Naive thymus-derived CD8-positive, alpha-beta T cell (primary cell): ENCODE measurements at regions of chr19 and their contacts with region 1.

Region 1: DNA sequence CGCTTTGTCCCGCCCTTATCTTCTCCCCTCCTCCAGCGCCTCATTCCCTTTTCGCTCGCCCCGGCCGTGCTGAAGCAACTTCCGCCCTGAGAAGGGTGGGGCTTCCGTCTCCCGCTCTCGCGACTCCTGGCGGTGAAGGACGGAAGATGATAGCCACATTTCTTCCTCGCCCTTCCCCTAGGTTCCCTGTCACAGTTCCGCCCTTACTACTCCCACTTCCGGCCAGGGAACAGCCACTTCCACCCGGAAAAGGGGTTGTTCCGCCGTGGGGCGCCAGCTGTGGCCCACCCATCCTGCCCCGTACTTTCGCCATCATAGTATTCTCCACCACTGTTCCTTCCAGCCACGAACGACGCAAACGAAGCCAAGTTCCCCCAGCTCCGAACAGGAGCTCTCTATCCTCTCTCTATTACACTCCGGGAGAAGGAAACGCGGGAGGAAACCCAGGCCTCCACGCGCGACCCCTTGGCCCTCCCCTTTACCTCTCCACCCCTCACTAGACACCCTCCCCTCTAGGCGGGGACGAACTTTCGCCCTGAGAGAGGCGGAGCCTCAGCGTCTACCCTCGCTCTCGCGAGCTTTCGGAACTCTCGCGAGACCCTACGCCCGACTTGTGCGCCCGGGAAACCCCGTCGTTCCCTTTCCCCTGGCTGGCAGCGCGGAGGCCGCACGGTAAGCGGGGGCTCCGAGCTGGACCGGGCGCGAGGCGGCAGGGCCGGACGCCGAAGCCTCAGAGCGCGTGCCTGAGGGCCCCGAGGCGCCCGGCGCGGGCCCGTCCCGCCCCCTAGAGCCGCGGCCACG is at the start of gene RPS19:
- DNase-seq: peak; percentile 94 to 99 (median 98)
- ATAC-seq: peak; percentile 82 to 86
- H3K4me3 Mint-ChIP-seq: peak within 1 kb of the TSS; percentile 80 to 100 (median 95)
- H3K27ac Mint-ChIP-seq: peak within 1 kb of the TSS; percentile 84 to 99 (median 97)
- H3K4me1 Mint-ChIP-seq: peaks cover 28 to 52% (median 44%) of the 10 kb centered on the region in 4 donors
- H3K27me3 Mint-ChIP-seq: no peaks in the 10 kb centered on the region
- polyA plus RNA-seq, gene RPS19: 6,905 to 8,825 (median 8,505) TPM

Region 2: DNA sequence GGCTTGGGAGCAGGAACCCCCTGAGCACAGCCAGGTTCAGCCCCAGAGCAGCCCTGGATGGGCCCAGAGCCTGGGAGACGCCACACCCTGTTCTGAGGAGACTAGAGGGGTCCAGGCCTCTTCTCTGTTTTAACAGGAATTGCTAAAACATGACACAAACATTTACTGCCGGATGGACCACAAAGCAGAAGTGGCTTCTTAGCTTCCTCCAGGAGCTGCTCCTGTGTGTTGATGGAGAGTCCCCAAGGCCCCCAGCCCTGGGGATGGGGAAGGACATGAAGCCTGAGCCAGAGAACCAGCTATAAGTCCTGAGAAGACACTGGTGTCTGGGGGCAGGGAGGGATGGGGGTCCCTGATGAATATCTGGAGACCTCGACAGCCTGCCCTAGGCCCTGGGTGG is 48.8 kb before region 1 on chr19:
- POLR2A ChIA-PET with region 1: no interaction called
- DNase-seq: no peak
- ATAC-seq: no peak
- H3K4me3 Mint-ChIP-seq: no peak overlapping the region
- H3K27ac Mint-ChIP-seq: no peak overlapping the region
- H3K4me1 Mint-ChIP-seq: peaks cover 5 to 29% (median 15%) of the 10 kb centered on the region in 4 donors
- H3K27me3 Mint-ChIP-seq: peaks cover 4 to 46% (median 7%) of the 10 kb centered on the region in 5 donors

Region 3: DNA sequence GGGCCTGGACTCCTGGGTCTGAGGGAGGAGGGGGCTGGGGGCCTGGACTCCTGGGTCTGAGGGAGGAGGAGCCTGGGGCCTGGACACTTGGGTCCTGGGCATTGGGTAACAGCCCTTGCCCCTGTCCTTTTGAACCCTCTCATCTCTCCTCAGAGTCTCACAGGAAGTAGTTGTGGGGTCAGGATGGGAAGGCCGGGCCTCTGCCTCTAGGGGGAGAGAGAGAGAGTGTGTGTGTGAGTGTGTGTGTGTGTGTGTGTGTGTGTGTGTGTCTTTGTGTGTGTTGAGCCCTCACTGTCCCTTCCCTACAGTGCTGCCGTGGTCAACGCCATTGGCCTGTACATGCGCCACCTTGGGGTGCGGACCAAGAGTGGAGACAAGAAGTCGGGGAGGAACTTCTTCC is 34.1 kb after region 1 on chr19:
- POLR2A ChIA-PET with region 1: interaction called, 819 read pairs
- DNase-seq: peak in 1 of 10 donors; percentile 42
- ATAC-seq: peak; percentile 19 to 41
- H3K4me3 Mint-ChIP-seq: peak overlapping the region in 9 of 10 donors; percentile 53 to 86 (median 74)
- H3K27ac Mint-ChIP-seq: peak overlapping the region; percentile 78 to 98 (median 90)
- H3K4me1 Mint-ChIP-seq: peaks cover 37 to 81% (median 75%) of the 10 kb centered on the region in 4 donors
- H3K27me3 Mint-ChIP-seq: no peaks in the 10 kb centered on the region

Region 4: GRCh38 chr19:41934849-41935374 is 75.1 kb after region 1 on chr19:
- POLR2A ChIA-PET with region 1: interaction called, 12 read pairs
- DNase-seq: peak; percentile 64 to 90 (median 76)
- ATAC-seq: peak; percentile 72 to 77
- H3K4me3 Mint-ChIP-seq: peak overlapping the region in 9 of 10 donors; percentile 25 to 78 (median 52)
- H3K27ac Mint-ChIP-seq: peak overlapping the region; percentile 81 to 96 (median 88)
- H3K4me1 Mint-ChIP-seq: peaks cover 41 to 70% (median 61%) of the 10 kb centered on the region in 4 donors
- H3K27me3 Mint-ChIP-seq: peaks cover 0 to 7% (median 0%) of the 10 kb centered on the region in 5 donors

Region 5: GRCh38 chr19:41951686-41952172 is 91.9 kb after region 1 on chr19:
- POLR2A ChIA-PET with region 1: interaction called, 45 read pairs
- DNase-seq: peak; percentile 69 to 93 (median 84)
- ATAC-seq: peak; percentile 86 to 88
- H3K4me3 Mint-ChIP-seq: peak overlapping the region in 4 of 10 donors; percentile 22 to 66 (median 43)
- H3K27ac Mint-ChIP-seq: peak overlapping the region; percentile 57 to 97 (median 86)
- H3K4me1 Mint-ChIP-seq: peaks cover 17 to 35% (median 26%) of the 10 kb centered on the region in 4 donors
- H3K27me3 Mint-ChIP-seq: no peaks in the 10 kb centered on the region